GM12878 (cell line): ENCODE measurements at regions of chr11 and their contacts with region 1.

Region 1: GRCh38 chr11:122882857-122883645 is 492 bp downstream of the JHY start:
- DNase-seq: no peak
- ATAC-seq: peak; percentile 67
- H3K4me3 ChIP-seq: peak overlapping the region; percentile 76
- H3K27ac ChIP-seq: peak overlapping the region; percentile 71
- H3K4me1 ChIP-seq: no peaks in the 10 kb centered on the region; the same call in 1 of the 2 replicates
- H3K27me3 ChIP-seq: no peaks in the 10 kb centered on the region
- CTCF ChIP-seq: no peak
- EP300 ChIP-seq: 0 out of 4 replicates have a peak, but pooled peaks of 1 of the 2 experiments have one; percentile 17
- POLR2A ChIP-seq: peak; percentile 53; the same call in 1 of the 2 replicates
- RAD21 ChIP-seq: no peak

Region 2: DNA sequence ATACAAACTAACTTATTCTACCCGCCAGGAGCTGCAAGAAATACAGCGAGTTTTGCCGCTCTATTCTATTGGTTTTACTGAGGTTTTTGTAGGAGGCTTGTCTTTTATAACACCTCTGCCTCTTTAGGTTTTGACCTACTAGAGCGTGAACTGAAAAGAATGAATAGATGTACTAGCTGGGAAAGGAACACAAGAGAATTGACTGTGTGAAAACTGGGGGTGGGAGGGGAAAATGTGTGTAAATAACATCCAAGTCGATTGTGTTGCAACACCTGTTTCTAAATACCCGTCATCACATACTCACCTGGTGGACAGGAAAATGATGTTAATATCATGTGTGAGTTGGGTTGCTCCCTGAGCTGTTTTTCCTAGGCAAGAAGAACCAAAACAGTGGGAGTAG is 13.4 kb before region 1 on chr11:
- CTCF ChIA-PET with region 1: interaction called, 101 read pairs
- POLR2A ChIA-PET with region 1: interaction called, 13 read pairs
- RAD21 ChIA-PET with region 1: interaction called, 36 read pairs
- SMC1A ChIA-PET with region 1: interaction called, 466 read pairs
- in situ Hi-C with region 1: no loop called
- intact Hi-C with region 1: no loop called
- DNase-seq: no peak
- ATAC-seq: peak; percentile 62
- H3K4me3 ChIP-seq: no peak overlapping the region
- H3K27ac ChIP-seq: no peak overlapping the region
- H3K4me1 ChIP-seq: no peaks in the 10 kb centered on the region; the same call in 1 of the 2 replicates
- H3K27me3 ChIP-seq: no peaks in the 10 kb centered on the region
- CTCF ChIP-seq: no peak
- EP300 ChIP-seq: no peak
- POLR2A ChIP-seq: no peak
- RAD21 ChIP-seq: no peak

Region 3: GRCh38 chr11:122893131-122893530 is 10.1 kb after region 1 on chr11:
- CTCF ChIA-PET with region 1: interaction called, 8 read pairs
- POLR2A ChIA-PET with region 1: interaction called, 13 read pairs
- RAD21 ChIA-PET with region 1: interaction called, 8 read pairs
- SMC1A ChIA-PET with region 1: interaction called, 33 read pairs
- in situ Hi-C with region 1: no loop called
- intact Hi-C with region 1: no loop called
- DNase-seq: no peak
- ATAC-seq: peak; percentile 90
- H3K4me3 ChIP-seq: no peak overlapping the region
- H3K27ac ChIP-seq: no peak overlapping the region
- H3K4me1 ChIP-seq: no peaks in the 10 kb centered on the region
- H3K27me3 ChIP-seq: no peaks in the 10 kb centered on the region
- CTCF ChIP-seq: no peak
- EP300 ChIP-seq: no peak
- POLR2A ChIP-seq: no peak
- RAD21 ChIP-seq: no peak